ENCODE measurements at regions of chr1 and their contacts with region 1.

Region 1: GRCh38 chr1:193059268-193060225 is at the starts of genes RO60 and UCHL5:
- DNase-seq: peak; percentile 97
- ATAC-seq: peak; percentile 96
- H3K4me3 ChIP-seq: peak within 1 kb of the TSS; percentile 92 to 99 (median 94)
- H3K27ac ChIP-seq: peak within 1 kb of the TSS; percentile 94
- H3K4me1 ChIP-seq: peaks cover 44% of the 10 kb centered on the region
- H3K27me3 ChIP-seq: peaks cover 0 to 2% of the 10 kb centered on the region in 2 experiments; a peak in 1 of 5 replicates
- CTCF ChIP-seq: peak; percentile 56
- EP300 ChIP-seq: 0 out of 4 replicates have a peak, but pooled peaks of 1 of the 2 experiments have one; percentile 32
- POLR2A ChIP-seq: peak; percentile 86 to 89
- RAD21 ChIP-seq: peak; percentile 30; the same call in 1 of the 2 replicates
- total RNA-seq, gene RO60: 53.7 and 90.0 TPM in 2 replicates
- total RNA-seq, gene UCHL5: 44.1 and 72.4 TPM in 2 replicates

Region 2: DNA sequence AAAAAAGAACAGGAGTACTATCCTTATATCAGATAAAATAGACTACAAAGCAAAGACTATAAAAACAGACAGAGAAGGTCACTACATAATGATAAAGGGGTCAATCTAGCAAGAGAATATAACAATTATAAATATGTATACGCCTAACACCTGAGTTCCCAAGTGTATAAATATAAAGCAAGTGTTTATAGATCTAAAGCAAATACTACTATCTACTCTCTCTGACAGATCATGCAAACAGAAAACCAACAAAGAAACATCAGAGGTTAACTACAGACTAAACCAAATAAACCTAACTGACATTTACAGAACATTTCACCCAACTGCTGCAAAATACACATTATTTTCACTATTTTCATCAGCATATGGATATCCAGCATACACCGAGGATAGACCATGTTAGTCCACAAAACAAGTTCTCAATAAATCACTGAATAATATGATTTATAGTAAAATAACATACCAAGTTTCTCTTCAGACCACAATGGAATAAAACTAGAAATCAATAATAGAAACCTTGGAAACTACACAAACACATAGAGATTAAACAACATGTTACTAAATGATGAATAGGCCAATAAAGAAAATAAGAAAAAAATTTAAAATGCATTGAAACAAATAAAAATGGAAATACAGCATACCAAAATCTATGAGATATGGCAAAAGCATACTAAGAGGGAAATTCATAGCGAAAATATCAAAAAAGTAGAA is 23.1 kb before region 1 on chr1:
- CTCF ChIA-PET with region 1: no interaction called
- POLR2A ChIA-PET with region 1: interaction called, 5 read pairs
- in situ Hi-C with region 1: no loop called
- intact Hi-C with region 1: loop called (anchors 1 kb)
- DNase-seq: peak; percentile 28
- ATAC-seq: peak; percentile 86
- H3K4me3 ChIP-seq: no peak overlapping the region; a peak in 1 of 6 replicates
- H3K27ac ChIP-seq: peak overlapping the region; percentile 53
- H3K4me1 ChIP-seq: peaks cover 24% of the 10 kb centered on the region
- H3K27me3 ChIP-seq: no peaks in the 10 kb centered on the region
- CTCF ChIP-seq: no peak
- EP300 ChIP-seq: peak in 1 of 2 experiments; percentile 34; a peak in 1 of 4 replicates
- POLR2A ChIP-seq: no peak
- RAD21 ChIP-seq: no peak

Region 3: DNA sequence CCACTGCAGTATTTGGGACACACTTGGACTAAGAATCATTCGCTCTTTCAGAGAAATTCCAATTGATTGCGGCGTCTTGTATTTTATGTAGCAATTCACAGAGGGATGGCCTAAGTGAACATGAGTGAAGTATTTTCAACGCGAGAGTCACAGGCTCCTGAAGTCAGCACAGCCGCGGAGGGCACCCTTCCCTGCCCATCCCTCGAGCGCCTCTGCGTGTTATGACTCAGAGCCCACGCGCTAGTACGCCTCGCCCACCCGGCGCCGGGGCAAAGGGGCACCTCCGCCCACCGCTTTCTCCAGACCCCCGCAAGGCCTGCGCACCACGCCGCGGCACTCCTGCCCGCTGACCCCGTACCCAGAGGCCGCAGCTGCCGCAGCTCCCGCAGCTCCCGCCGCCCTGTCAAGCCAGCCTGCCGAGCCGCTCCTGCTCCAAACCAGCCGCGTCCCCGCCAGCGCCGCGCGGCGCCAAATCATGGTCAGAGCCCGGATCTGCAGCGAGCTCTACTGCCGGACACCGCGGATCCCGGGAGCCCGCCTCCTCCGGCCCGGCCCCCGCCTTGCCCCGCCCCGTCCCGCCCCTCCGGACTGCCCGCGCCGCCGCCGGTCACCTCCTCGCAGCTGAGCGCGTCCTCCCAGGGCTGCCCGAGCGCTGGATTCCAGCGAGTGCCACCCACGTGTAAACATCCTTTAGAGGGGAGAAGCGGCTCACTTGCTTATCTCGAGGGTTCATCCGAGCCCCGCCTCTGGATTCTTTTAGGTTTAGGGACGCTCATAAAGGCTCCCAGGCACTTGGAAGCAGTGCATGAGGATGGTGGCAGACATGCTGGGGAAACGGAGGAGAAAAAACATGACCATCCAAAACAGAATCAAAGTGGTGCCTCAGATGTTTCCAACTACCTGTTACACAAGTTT is 45.6 kb after region 1 on chr1 and contains the start of gene GLRX2:
- CTCF ChIA-PET with region 1: no interaction called
- POLR2A ChIA-PET with region 1: interaction called, 23 read pairs
- in situ Hi-C with region 1: no loop called
- intact Hi-C with region 1: loop called (anchors 1 kb)
- DNase-seq: peak; percentile 66
- ATAC-seq: peak; percentile 96
- H3K4me3 ChIP-seq: peak within 1 kb of the TSS; percentile 70 to 93 (median 82)
- H3K27ac ChIP-seq: peak within 1 kb of the TSS; percentile 89
- H3K4me1 ChIP-seq: peaks cover 56% of the 10 kb centered on the region
- H3K27me3 ChIP-seq: no peaks in the 10 kb centered on the region; a peak in 1 of 5 replicates
- CTCF ChIP-seq: peak; percentile 37
- EP300 ChIP-seq: peak in 1 of 2 experiments; percentile 39; a peak in 1 of 4 replicates
- POLR2A ChIP-seq: peak; percentile 79 to 86
- RAD21 ChIP-seq: peak; percentile 69
- total RNA-seq, gene GLRX2: 39.0 and 42.1 TPM in 2 replicates

Region 4: GRCh38 chr1:193111641-193112090 is 52.1 kb after region 1 on chr1:
- CTCF ChIA-PET with region 1: no interaction called
- POLR2A ChIA-PET with region 1: interaction called, 10 read pairs
- in situ Hi-C with region 1: no loop called
- intact Hi-C with region 1: no loop called
- DNase-seq: peak; percentile 67
- ATAC-seq: peak; percentile 53
- H3K4me3 ChIP-seq: peak overlapping the region; percentile 43 to 62 (median 52)
- H3K27ac ChIP-seq: peak overlapping the region; percentile 86
- H3K4me1 ChIP-seq: peaks cover 91% of the 10 kb centered on the region
- H3K27me3 ChIP-seq: no peaks in the 10 kb centered on the region
- CTCF ChIP-seq: no peak
- EP300 ChIP-seq: peak in 1 of 2 experiments; percentile 64; a peak in 3 of 4 replicates
- POLR2A ChIP-seq: no peak
- RAD21 ChIP-seq: no peak

Region 5: GRCh38 chr1:193121616-193122593 is 62.4 kb after region 1 on chr1 and contains the start of gene CDC73:
- CTCF ChIA-PET with region 1: no interaction called
- POLR2A ChIA-PET with region 1: interaction called, 18 read pairs
- in situ Hi-C with region 1: no loop called
- intact Hi-C with region 1: loop called (anchors 1 kb)
- DNase-seq: peak; percentile 89
- ATAC-seq: peak; percentile 97
- H3K4me3 ChIP-seq: peak within 1 kb of the TSS; percentile 85 to 98 (median 94)
- H3K27ac ChIP-seq: peak within 1 kb of the TSS; percentile 91
- H3K4me1 ChIP-seq: peaks cover 32% of the 10 kb centered on the region
- H3K27me3 ChIP-seq: no peaks in the 10 kb centered on the region; a peak in 2 of 5 replicates
- CTCF ChIP-seq: peak; percentile 98
- EP300 ChIP-seq: peak in 1 of 2 experiments; percentile 47; a peak in 3 of 4 replicates
- POLR2A ChIP-seq: peak; percentile 72 to 80
- RAD21 ChIP-seq: peak; percentile 99
- total RNA-seq, gene CDC73: 26.3 and 38.3 TPM in 2 replicates

Region 6: GRCh38 chr1:193143285-193143684 is 83.7 kb after region 1 on chr1:
- CTCF ChIA-PET with region 1: no interaction called
- POLR2A ChIA-PET with region 1: no interaction called
- in situ Hi-C with region 1: no loop called
- intact Hi-C with region 1: no loop called
- DNase-seq: no peak
- ATAC-seq: no peak
- H3K4me3 ChIP-seq: no peak overlapping the region
- H3K27ac ChIP-seq: no peak overlapping the region
- H3K4me1 ChIP-seq: no peaks in the 10 kb centered on the region
- H3K27me3 ChIP-seq: no peaks in the 10 kb centered on the region
- CTCF ChIP-seq: 0 out of 2 replicates have a peak, but pooled peaks have one; percentile 9
- EP300 ChIP-seq: no peak
- POLR2A ChIP-seq: no peak
- RAD21 ChIP-seq: no peak

Measured in HepG2 (cell line).